H1 (cell line): ENCODE measurements at regions of chr7 and their contacts with region 1.

Region 1: DNA sequence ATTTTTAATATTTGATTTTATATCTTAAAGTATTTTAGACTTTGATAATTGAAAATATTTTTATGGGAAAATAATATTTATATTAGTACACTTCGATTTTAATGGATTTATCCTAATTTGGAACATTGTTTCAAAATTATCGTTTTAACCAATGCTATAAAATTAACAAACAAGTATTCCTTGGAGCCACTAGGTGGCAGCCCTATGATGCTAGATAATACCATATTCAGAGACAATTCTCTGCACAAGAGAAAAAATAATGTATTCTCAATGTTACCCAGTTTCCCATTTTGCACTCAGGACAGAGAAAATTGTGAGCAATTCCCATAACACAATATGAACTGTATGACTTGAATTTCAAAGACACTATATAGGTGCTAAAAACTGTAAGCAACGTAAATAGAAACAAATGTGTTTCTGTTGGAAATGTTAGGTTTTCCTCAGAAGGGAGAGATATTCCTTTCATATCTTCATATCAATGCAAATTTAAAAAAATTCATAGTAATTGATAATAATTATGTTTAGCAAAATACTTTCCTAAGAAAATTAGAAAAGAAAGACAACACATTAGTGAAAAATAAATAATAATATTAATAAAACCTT is 237.8 kb downstream of the SEMA3E start:
- DNase-seq: no peak
- H3K4me3 ChIP-seq: no peak overlapping the region
- H3K27ac ChIP-seq: no peak overlapping the region
- H3K4me1 ChIP-seq: peaks cover 0 to 9% (median 4%) of the 10 kb centered on the region in 4 experiments; a peak in 2 of 7 replicates
- H3K27me3 ChIP-seq: no peaks in the 10 kb centered on the region
- CTCF ChIP-seq: peak in 2 of 3 experiments; percentile 28 to 49; a peak in 2 of 4 replicates
- EP300 ChIP-seq: no peak
- POLR2A ChIP-seq: no peak
- RAD21 ChIP-seq: peak; percentile 77 to 91

Region 2: GRCh38 chr7:83325083-83325482 is 86.0 kb before region 1 on chr7:
- CTCF ChIA-PET with region 1: no interaction called
- POLR2A ChIA-PET with region 1: no interaction called
- DNase-seq: no peak
- H3K4me3 ChIP-seq: no peak overlapping the region
- H3K27ac ChIP-seq: no peak overlapping the region
- H3K4me1 ChIP-seq: no peaks in the 10 kb centered on the region
- H3K27me3 ChIP-seq: no peaks in the 10 kb centered on the region
- CTCF ChIP-seq: peak in 2 of 3 experiments; percentile 22 to 41; a peak in 2 of 4 replicates
- EP300 ChIP-seq: no peak
- POLR2A ChIP-seq: no peak
- RAD21 ChIP-seq: peak in 1 of 2 experiments; percentile 41; a peak in 2 of 4 replicates

Region 3: GRCh38 chr7:83359108-83359507 is 52.0 kb before region 1 on chr7:
- CTCF ChIA-PET with region 1: no interaction called
- POLR2A ChIA-PET with region 1: no interaction called
- DNase-seq: no peak
- H3K4me3 ChIP-seq: no peak overlapping the region
- H3K27ac ChIP-seq: no peak overlapping the region
- H3K4me1 ChIP-seq: no peaks in the 10 kb centered on the region
- H3K27me3 ChIP-seq: no peaks in the 10 kb centered on the region
- CTCF ChIP-seq: no peak
- EP300 ChIP-seq: no peak
- POLR2A ChIP-seq: no peak
- RAD21 ChIP-seq: no peak

Region 4: DNA sequence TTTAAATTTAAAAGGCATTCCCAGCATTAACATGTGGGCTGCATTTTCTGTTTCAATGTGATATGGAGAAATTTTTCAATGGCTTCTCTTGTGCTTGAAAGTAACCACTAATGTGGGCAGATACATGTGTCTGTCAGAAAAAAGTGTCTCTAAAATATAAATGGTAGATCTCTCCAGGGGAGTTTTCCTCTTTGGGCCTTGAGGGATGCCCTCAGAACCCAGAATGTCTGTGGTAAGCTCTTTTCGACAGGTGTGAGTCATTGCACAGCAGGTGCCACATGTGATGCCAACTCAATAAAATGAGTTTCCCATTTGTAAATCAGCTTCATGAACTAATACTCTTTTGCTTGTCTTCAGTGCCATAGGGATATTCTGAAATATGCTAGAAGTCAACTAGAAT is 16.8 kb after region 1 on chr7:
- CTCF ChIA-PET with region 1: interaction called, 13 read pairs
- POLR2A ChIA-PET with region 1: interaction called, 7 read pairs
- DNase-seq: no peak
- H3K4me3 ChIP-seq: peak overlapping the region in 1 of 4 experiments; percentile 22; a peak in 1 of 8 replicates
- H3K27ac ChIP-seq: no peak overlapping the region
- H3K4me1 ChIP-seq: peaks cover 0 to 17% (median 5%) of the 10 kb centered on the region in 4 experiments; a peak in 5 of 7 replicates
- H3K27me3 ChIP-seq: no peaks in the 10 kb centered on the region
- CTCF ChIP-seq: no peak
- EP300 ChIP-seq: no peak
- POLR2A ChIP-seq: no peak
- RAD21 ChIP-seq: no peak

Region 5: GRCh38 chr7:83457022-83457892 is 46.2 kb after region 1 on chr7:
- CTCF ChIA-PET with region 1: interaction called, 5 read pairs
- POLR2A ChIA-PET with region 1: interaction called, 15 read pairs
- DNase-seq: no peak
- H3K4me3 ChIP-seq: peak overlapping the region in 2 of 4 experiments; percentile 4 to 21; a peak in 2 of 8 replicates
- H3K27ac ChIP-seq: no peak overlapping the region
- H3K4me1 ChIP-seq: peaks cover 0 to 22% (median 10%) of the 10 kb centered on the region in 4 experiments; a peak in 5 of 7 replicates
- H3K27me3 ChIP-seq: no peaks in the 10 kb centered on the region
- CTCF ChIP-seq: no peak
- EP300 ChIP-seq: no peak
- POLR2A ChIP-seq: no peak
- RAD21 ChIP-seq: no peak

Region 6: GRCh38 chr7:83468251-83468739 is 57.2 kb after region 1 on chr7:
- CTCF ChIA-PET with region 1: interaction called, 4 read pairs
- POLR2A ChIA-PET with region 1: interaction called, 44 read pairs
- DNase-seq: no peak
- H3K4me3 ChIP-seq: no peak overlapping the region
- H3K27ac ChIP-seq: no peak overlapping the region
- H3K4me1 ChIP-seq: peaks cover 0 to 11% (median 3%) of the 10 kb centered on the region in 4 experiments; a peak in 3 of 7 replicates
- H3K27me3 ChIP-seq: peaks cover 0 to 1% (median 0%) of the 10 kb centered on the region in 4 experiments; a peak in 1 of 7 replicates
- CTCF ChIP-seq: no peak
- EP300 ChIP-seq: no peak
- POLR2A ChIP-seq: peak; percentile 84 to 88
- RAD21 ChIP-seq: no peak

Region 7: DNA sequence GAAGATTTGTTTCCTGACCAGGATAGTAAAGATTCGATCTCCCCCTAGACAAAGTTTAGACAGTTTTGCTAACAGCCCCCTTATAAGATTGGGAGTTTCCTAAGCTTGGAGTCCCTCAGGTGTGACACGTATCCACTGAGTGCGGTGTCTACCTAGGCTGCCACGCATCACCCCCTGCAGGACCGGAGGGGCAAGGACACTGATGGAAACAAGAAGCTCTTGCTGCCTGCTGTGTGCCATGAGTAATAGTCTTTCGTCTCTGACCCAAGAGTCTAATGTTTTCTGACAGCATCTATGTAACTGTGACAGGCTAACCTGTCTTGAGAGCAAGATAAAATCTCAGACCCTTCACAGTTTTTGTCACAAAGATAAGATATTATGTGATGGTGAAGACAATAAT is 64.3 kb after region 1 on chr7:
- CTCF ChIA-PET with region 1: interaction called, 15 read pairs
- POLR2A ChIA-PET with region 1: interaction called, 43 read pairs
- DNase-seq: no peak
- H3K4me3 ChIP-seq: no peak overlapping the region
- H3K27ac ChIP-seq: no peak overlapping the region
- H3K4me1 ChIP-seq: no peaks in the 10 kb centered on the region; a peak in 1 of 7 replicates
- H3K27me3 ChIP-seq: no peaks in the 10 kb centered on the region; a peak in 1 of 7 replicates
- CTCF ChIP-seq: peak; percentile 69 to 87 (median 76)
- EP300 ChIP-seq: no peak
- POLR2A ChIP-seq: peak in 1 of 2 experiments; percentile 52; a peak in 1 of 3 replicates
- RAD21 ChIP-seq: peak; percentile 71 to 77

Region 8: GRCh38 chr7:83517035-83517700 is 106.1 kb after region 1 on chr7:
- CTCF ChIA-PET with region 1: interaction called, 14 read pairs
- POLR2A ChIA-PET with region 1: no interaction called
- DNase-seq: no peak
- H3K4me3 ChIP-seq: no peak overlapping the region
- H3K27ac ChIP-seq: no peak overlapping the region
- H3K4me1 ChIP-seq: peaks cover 0 to 5% (median 1%) of the 10 kb centered on the region in 4 experiments; a peak in 3 of 7 replicates
- H3K27me3 ChIP-seq: no peaks in the 10 kb centered on the region
- CTCF ChIP-seq: no peak
- EP300 ChIP-seq: no peak
- POLR2A ChIP-seq: no peak
- RAD21 ChIP-seq: no peak